ENCODE measurements at regions of chr9 and their contacts with region 1.

Region 1: GRCh38 chr9:78101247-78101646 is 69.6 kb upstream of the GNAQ start:
- DNase-seq: no peak
- ATAC-seq: no peak
- H3K4me3 ChIP-seq: no peak overlapping the region
- H3K4me3 Mint-ChIP-seq: no peak overlapping the region
- H3K27ac ChIP-seq: no peak overlapping the region
- H3K27ac Mint-ChIP-seq: no peak overlapping the region
- H3K4me1 ChIP-seq: peaks cover 0 to 13% of the 10 kb centered on the region in 2 experiments
- H3K4me1 Mint-ChIP-seq: peaks cover 24 to 36% (median 34%) of the 10 kb centered on the region in 3 donors
- H3K27me3 ChIP-seq: no peaks in the 10 kb centered on the region
- H3K27me3 Mint-ChIP-seq: no peaks in the 10 kb centered on the region

Region 2: DNA sequence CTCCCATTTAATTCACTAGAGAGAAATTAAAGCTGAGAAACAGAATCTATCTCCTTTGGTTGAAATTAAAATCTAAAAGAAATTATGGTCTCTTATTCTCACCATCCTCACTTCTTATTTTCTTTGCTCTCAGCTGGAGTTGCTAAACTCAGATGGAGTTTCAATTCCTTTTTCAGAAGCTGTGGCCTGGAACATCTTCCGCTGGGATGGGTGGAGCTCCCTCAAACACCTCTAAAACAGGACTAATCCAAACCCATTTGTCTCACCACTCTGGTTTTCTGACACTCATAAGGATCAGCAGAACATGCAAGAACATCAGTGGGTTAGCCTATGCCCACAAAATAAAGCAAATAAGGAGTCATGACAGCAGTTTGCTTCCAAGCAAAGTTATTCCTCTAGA is 95.0 kb after region 1 on chr9:
- CTCF ChIA-PET with region 1: interaction called in 1 of 2 experiments, 3 read pairs
- POLR2A ChIA-PET with region 1: interaction called in 1 of 2 experiments, 10 read pairs
- DNase-seq: no peak
- ATAC-seq: no peak
- H3K4me3 ChIP-seq: no peak overlapping the region
- H3K4me3 Mint-ChIP-seq: no peak overlapping the region
- H3K27ac ChIP-seq: no peak overlapping the region
- H3K27ac Mint-ChIP-seq: no peak overlapping the region
- H3K4me1 ChIP-seq: peaks cover 5 to 9% of the 10 kb centered on the region in 2 experiments
- H3K4me1 Mint-ChIP-seq: peaks cover 20 to 33% (median 22%) of the 10 kb centered on the region in 3 donors
- H3K27me3 ChIP-seq: no peaks in the 10 kb centered on the region
- H3K27me3 Mint-ChIP-seq: no peaks in the 10 kb centered on the region

Measured in T-cell (primary cell).